ENCODE measurements at regions of chr12 and their contacts with region 1.

Region 1: DNA sequence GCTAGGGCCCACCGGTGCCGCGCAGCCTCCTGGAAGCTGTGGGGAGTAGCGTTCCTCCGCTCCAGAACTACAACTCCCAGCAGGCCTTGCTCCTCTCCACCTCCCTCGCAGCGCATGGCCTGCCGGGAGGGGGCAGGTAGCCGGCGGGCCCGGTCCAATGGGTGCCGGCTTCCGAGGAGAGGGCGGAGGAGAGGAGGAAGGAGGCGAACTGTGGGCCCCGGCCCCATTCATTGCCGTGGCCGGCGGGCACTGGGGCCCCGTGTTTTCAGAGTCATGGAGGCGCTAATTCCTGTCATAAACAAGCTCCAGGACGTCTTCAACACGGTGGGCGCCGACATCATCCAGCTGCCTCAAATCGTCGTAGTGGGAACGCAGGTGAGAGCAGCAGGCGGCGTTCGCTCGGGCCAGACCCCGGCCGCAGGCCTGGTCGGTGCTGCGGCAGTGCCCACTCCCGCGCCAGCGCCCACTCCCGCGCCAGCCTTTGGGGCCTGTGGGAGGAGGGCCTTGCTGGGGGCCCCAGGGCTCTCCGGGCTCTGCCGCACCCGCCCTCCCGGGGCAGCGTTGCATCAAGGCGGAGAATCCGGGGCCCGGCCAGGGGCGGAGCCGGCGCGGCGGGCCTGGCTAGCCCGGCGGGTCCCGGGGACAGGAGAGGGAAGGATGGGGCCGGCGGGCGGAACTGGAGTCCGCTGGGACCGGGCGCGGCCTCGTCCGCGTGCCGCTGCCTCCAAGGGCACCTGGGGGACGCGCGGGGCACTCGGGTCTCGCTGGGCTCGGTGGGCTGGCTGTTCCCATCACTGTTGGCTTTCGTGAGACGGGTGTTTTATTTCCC is at the start of gene DNM1L:
- DNase-seq: peak; percentile 97
- H3K4me3 ChIP-seq: peak within 1 kb of the TSS; percentile 65 to 97 (median 82)
- H3K27ac ChIP-seq: peak within 1 kb of the TSS; percentile 90 to 99 (median 97)
- H3K4me1 ChIP-seq: peaks cover 0 to 15% (median 15%) of the 10 kb centered on the region in 4 donors
- H3K27me3 ChIP-seq: no peaks in the 10 kb centered on the region
- CTCF ChIP-seq: no peak
- EP300 ChIP-seq: peak in 1 of 4 donors; percentile 3
- POLR2A ChIP-seq: peak; percentile 67 to 80
- total RNA-seq, gene DNM1L: 67.3 to 77.2 (median 72.6) TPM

Region 2: DNA sequence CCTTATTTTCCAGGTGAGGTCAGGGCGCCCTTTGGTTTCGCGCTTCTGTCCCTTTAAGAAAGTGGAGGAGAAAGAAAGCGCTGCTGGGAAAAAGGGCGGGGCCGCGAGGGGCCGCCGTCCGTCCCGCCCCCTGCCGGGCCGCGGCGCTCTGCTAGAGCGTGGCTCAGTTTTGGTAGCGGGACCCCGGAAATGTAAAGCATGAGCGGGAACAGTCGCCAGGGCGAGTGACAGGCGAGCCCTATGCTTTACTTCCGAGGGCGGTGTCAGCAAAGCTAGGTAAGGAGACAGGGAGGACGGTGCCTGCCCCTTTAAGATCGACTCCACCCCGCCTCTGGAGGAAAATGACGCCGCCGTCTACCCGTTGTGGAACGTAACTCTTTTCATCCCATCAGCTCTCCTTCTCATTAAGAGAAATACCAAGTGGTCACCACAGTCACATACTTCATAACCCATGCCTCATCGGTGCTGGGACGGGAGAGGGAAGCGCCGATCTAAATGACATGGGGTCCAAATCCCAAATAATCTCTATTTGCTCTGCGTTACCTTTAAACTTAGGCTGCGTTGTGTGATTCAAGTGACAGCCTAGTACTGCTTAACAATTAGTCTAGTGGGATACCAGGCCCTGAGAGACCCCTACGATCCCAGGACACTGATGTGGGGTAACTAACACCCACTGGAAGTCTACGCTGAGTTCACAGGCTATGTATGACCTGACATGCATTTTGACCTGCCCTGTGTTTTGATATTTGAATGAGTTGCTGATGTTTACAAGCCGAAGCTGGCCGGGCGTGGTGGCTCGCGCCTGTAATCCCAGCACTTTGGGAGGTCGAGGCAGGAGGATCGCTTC is 1020.0 kb before region 1 on chr12 and contains the start of gene ETFBKMT:
- intact Hi-C with region 1: loop called (anchors 5 kb)
- DNase-seq: peak; percentile 94
- H3K4me3 ChIP-seq: peak within 1 kb of the TSS; percentile 61 to 75 (median 70)
- H3K27ac ChIP-seq: peak within 1 kb of the TSS; percentile 91 to 96 (median 94)
- H3K4me1 ChIP-seq: peaks cover 0 to 6% (median 4%) of the 10 kb centered on the region in 4 donors
- H3K27me3 ChIP-seq: no peaks in the 10 kb centered on the region
- CTCF ChIP-seq: peak in 2 of 4 experiments; percentile 28 to 63
- EP300 ChIP-seq: no peak
- POLR2A ChIP-seq: no peak
- total RNA-seq, gene ETFBKMT: 2.5 to 4.4 (median 3.0) TPM

Region 3: DNA sequence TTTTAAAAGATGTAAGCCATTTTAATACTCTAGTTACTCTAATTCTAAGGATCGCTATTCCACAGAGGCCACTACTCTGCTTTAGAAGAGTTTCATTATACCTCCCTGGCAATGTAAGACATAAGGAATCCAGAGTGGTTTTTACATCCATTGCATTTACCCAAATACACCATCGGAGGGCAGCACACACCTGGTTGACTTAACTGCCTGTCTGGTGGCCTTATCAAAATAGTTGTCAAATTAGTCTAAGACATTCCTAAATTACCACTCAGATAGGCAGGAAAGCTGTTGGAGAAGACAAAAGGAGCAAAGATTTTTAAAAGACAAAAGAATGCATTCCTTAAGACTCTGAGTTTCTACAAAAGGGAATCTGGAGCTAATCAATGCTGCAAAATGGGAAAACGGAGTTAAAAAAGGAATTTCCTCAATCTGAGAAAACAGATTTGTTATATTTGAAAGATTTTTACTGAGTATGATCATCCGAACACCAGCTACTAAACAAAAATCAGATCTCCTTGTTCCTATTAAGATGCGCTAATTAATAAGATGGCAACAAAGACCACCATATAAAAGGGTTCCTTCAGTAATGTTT is 313.7 kb before region 1 on chr12:
- intact Hi-C with region 1: loop called (anchors 10 kb)
- DNase-seq: no peak
- H3K4me3 ChIP-seq: no peak overlapping the region
- H3K27ac ChIP-seq: no peak overlapping the region
- H3K4me1 ChIP-seq: no peaks in the 10 kb centered on the region
- H3K27me3 ChIP-seq: no peaks in the 10 kb centered on the region
- CTCF ChIP-seq: peak in 3 of 4 experiments; percentile 50 to 63 (median 61)
- EP300 ChIP-seq: no peak
- POLR2A ChIP-seq: no peak

Region 4: DNA sequence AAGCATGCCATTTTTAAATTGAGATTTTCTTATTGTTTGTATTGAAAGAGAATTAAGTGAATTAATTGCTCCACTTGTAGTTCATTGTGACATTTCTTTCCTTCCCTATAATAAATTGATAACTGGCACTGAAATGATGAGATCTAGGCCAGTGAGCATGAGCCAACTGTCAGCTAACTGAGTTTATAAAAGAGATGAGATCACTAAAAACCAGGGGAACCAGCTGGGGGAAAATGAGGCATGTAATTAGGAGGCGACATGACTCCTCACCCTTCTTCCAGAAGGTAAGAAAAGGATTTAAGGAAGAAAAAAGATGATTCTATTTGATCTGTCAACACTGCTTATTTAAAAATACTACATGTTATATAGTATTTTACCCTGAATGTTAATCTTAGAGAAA is 104.7 kb before region 1 on chr12:
- intact Hi-C with region 1: no loop called
- DNase-seq: no peak
- H3K4me3 ChIP-seq: no peak overlapping the region
- H3K27ac ChIP-seq: no peak overlapping the region
- H3K4me1 ChIP-seq: no peaks in the 10 kb centered on the region
- H3K27me3 ChIP-seq: no peaks in the 10 kb centered on the region
- CTCF ChIP-seq: no peak
- EP300 ChIP-seq: no peak
- POLR2A ChIP-seq: no peak

Region 5: GRCh38 chr12:34022079-34022830 is 1343.0 kb after region 1 on chr12 and contains the start of gene ALG10:
- intact Hi-C with region 1: loop called (anchors 1 kb)
- DNase-seq: peak; percentile 98
- H3K4me3 ChIP-seq: peak within 1 kb of the TSS; percentile 46 to 69 (median 66)
- H3K27ac ChIP-seq: peak within 1 kb of the TSS; percentile 82 to 88 (median 87)
- H3K4me1 ChIP-seq: peaks cover 0 to 18% (median 11%) of the 10 kb centered on the region in 4 donors
- H3K27me3 ChIP-seq: no peaks in the 10 kb centered on the region
- CTCF ChIP-seq: peak; percentile 25 to 66 (median 51)
- EP300 ChIP-seq: no peak
- POLR2A ChIP-seq: no peak
- total RNA-seq, gene ALG10: 3.7 to 7.9 (median 6.2) TPM

Measured in sigmoid colon (tissue), 7 donors.